SK-N-SH (cell line): ENCODE measurements at regions of chr4 and their contacts with region 1.

Region 1: DNA sequence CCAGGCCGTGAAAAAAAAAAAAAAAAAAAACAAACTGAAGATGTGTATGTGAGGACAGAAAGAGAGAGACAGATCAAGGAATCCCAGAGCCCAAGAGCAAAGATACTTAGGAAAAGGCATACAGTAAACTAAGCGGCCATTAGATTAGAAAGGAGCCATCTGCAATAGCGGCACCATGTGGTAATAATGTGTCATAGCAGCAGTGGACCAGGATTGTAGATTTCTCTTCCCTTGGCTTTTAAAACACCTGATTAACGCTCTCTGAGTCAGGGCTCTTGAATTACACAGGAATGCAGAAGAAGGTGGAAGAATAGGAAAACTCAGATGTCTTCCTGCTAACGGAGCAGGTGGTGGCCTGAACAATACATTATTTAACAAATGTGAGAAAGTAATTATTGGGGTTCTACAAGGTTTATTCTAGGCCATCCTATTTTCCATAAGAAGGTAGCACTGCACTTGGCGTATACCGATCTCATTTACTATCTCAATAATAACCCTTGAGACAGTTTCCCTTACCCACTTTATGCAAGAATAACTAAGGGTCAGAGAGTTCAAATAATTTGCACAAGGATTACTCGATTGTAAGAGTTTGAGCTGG is 182.7 kb downstream of the KCNIP4 start:
- DNase-seq: peak; percentile 25
- H3K4me3 ChIP-seq: no peak overlapping the region; a peak in 1 of 4 replicates
- H3K27ac ChIP-seq: peak overlapping the region in 1 of 2 experiments; percentile 99; a peak in 2 of 4 replicates
- H3K4me1 ChIP-seq: peaks cover 8 to 29% of the 10 kb centered on the region in 2 experiments; a peak in 3 of 4 replicates
- H3K27me3 ChIP-seq: no peaks in the 10 kb centered on the region
- CTCF ChIP-seq: peak; percentile 93
- EP300 ChIP-seq: no peak
- RAD21 ChIP-seq: peak; percentile 92

Region 2: GRCh38 chr4:21469438-21470300 is 296.2 kb before region 1 on chr4:
- CTCF ChIA-PET with region 1: interaction called, 22 read pairs
- POLR2A ChIA-PET with region 1: no interaction called
- DNase-seq: peak; percentile 20
- H3K4me3 ChIP-seq: no peak overlapping the region; a peak in 1 of 4 replicates
- H3K27ac ChIP-seq: peak overlapping the region in 1 of 2 experiments; percentile 72; a peak in 2 of 4 replicates
- H3K4me1 ChIP-seq: peaks cover 0 to 16% of the 10 kb centered on the region in 2 experiments; a peak in 2 of 4 replicates
- H3K27me3 ChIP-seq: no peaks in the 10 kb centered on the region
- CTCF ChIP-seq: peak; percentile 71
- EP300 ChIP-seq: no peak
- RAD21 ChIP-seq: peak; percentile 83

Region 3: GRCh38 chr4:21512353-21512752 is 253.6 kb before region 1 on chr4:
- CTCF ChIA-PET with region 1: interaction called, 234 read pairs
- POLR2A ChIA-PET with region 1: no interaction called
- DNase-seq: peak; percentile 46
- H3K4me3 ChIP-seq: no peak overlapping the region; a peak in 1 of 4 replicates
- H3K27ac ChIP-seq: peak overlapping the region in 1 of 2 experiments; percentile 69; a peak in 2 of 4 replicates
- H3K4me1 ChIP-seq: peaks cover 0 to 9% of the 10 kb centered on the region in 2 experiments; a peak in 2 of 4 replicates
- H3K27me3 ChIP-seq: no peaks in the 10 kb centered on the region
- CTCF ChIP-seq: peak; percentile 69
- EP300 ChIP-seq: no peak
- RAD21 ChIP-seq: peak; percentile 98

Region 4: GRCh38 chr4:21692241-21692640 is 73.7 kb before region 1 on chr4:
- CTCF ChIA-PET with region 1: interaction called, 23 read pairs
- POLR2A ChIA-PET with region 1: interaction called, 3 read pairs
- DNase-seq: no peak
- H3K4me3 ChIP-seq: no peak overlapping the region
- H3K27ac ChIP-seq: no peak overlapping the region
- H3K4me1 ChIP-seq: peaks cover 0 to 2% of the 10 kb centered on the region in 2 experiments; a peak in 2 of 4 replicates
- H3K27me3 ChIP-seq: no peaks in the 10 kb centered on the region
- CTCF ChIP-seq: no peak
- EP300 ChIP-seq: no peak
- RAD21 ChIP-seq: no peak

Region 5: GRCh38 chr4:21921526-21922180 is 155.7 kb after region 1 on chr4:
- CTCF ChIA-PET with region 1: no interaction called
- POLR2A ChIA-PET with region 1: no interaction called
- DNase-seq: no peak
- H3K4me3 ChIP-seq: no peak overlapping the region
- H3K27ac ChIP-seq: no peak overlapping the region
- H3K4me1 ChIP-seq: no peaks in the 10 kb centered on the region
- H3K27me3 ChIP-seq: no peaks in the 10 kb centered on the region; the same call in 1 of the 2 replicates
- CTCF ChIP-seq: no peak
- EP300 ChIP-seq: no peak
- RAD21 ChIP-seq: no peak